ENCODE measurements at regions of chr17 and their contacts with region 1.

Region 1: GRCh38 chr17:74457146-74457819 is 9.2 kb upstream of the CD300A start:
- DNase-seq: peak in 2 of 3 donors; percentile 72 to 80
- H3K4me3 ChIP-seq: peak overlapping the region in 1 of 7 experiments; percentile 6
- H3K27ac ChIP-seq: no peak overlapping the region
- H3K4me1 ChIP-seq: peaks cover 1 to 61% (median 61%) of the 10 kb centered on the region in 4 experiments
- H3K27me3 ChIP-seq: peaks cover 0 to 5% (median 0%) of the 10 kb centered on the region in 5 experiments

Region 2: DNA sequence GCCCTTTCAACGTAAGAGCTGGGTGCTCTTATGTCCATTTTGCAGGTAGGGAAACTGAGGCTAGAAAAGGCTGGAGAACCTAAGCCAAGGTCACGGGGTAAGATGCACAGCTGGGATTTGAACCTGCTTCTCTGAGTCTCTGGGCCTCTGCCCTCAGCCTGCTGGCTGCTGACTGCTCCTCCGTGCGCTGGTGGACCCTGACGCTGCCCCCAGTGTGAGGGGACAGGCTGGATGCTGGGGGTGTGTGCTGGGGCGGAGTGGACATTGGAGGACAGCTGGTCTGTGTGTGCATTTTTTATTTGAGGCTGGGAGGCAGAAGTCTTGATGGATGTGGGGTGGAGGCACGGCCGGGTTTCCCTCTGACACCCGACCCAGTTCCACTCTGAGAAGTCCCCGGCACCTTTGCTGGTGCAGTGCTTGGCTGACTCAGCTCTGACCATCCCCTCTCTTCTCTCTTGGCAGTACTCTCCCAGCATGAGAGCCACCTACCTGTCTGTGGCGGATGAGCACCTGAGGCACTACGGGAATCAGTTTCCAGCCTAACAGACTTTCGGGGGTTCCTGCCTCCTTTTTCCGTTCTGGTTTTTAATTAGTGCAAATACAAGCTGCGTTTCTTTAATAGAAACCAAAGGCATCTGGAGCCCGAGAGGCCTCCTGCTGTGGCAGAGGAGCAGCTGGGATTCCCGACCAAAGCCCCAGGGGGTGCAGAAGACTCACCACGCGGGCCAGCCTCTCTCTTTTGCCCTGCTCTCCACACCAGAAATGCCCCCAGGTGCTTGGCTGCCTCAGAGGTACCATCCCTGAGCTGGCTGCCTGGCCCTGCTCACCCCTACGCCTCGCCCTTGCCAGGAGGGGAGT is 197.4 kb before region 1 on chr17:
- CTCF ChIA-PET with region 1: no interaction called
- POLR2A ChIA-PET with region 1: no interaction called
- DNase-seq: no peak
- H3K4me3 ChIP-seq: no peak overlapping the region
- H3K27ac ChIP-seq: no peak overlapping the region
- H3K4me1 ChIP-seq: peaks cover 0 to 2% (median 0%) of the 10 kb centered on the region in 4 experiments
- H3K27me3 ChIP-seq: no peaks in the 10 kb centered on the region

Region 3: GRCh38 chr17:74361230-74362068 is 95.8 kb before region 1 on chr17 and contains the start of gene BTBD17:
- CTCF ChIA-PET with region 1: interaction called, 25 read pairs
- POLR2A ChIA-PET with region 1: no interaction called
- DNase-seq: peak in 2 of 3 donors; percentile 31 to 39
- H3K4me3 ChIP-seq: no peak within 1 kb of the TSS
- H3K27ac ChIP-seq: no peak within 1 kb of the TSS
- H3K4me1 ChIP-seq: peaks cover 0 to 29% (median 23%) of the 10 kb centered on the region in 4 experiments
- H3K27me3 ChIP-seq: peaks cover 0 to 38% (median 15%) of the 10 kb centered on the region in 5 experiments

Region 4: DNA sequence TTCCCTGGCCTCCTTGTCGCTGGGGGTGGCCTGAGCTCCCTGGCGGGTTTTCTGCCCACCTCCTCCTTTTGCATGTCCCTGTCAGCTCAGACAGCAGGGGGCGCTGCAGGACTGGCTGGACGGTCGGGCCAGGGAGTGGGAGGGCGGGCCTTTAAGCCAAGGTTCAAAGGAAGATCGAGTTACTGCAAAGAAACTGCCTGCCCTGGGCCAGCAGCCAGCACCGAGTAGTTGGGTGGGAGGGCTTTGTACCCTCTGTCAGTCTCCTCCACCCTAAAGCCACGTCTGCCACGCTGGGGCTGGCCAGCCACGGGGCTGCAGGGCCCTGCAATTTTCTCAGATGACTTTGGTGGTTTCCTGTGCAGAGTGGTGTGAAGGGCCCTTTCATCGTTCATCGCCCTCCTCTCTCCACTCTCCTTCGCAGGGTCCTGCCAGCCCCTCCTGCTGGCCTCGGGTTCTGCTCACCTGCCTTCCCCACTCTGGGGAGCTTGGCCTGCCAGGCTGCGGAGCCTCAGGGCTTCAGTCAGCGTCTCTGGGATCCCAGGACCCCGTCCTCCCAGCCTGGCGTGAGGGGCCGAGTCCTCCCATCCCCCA is 77.7 kb before region 1 on chr17:
- CTCF ChIA-PET with region 1: interaction called, 184 read pairs
- POLR2A ChIA-PET with region 1: no interaction called
- DNase-seq: peak; percentile 85 to 91 (median 90)
- H3K4me3 ChIP-seq: peak overlapping the region in 4 of 7 experiments; percentile 3 to 58 (median 20)
- H3K27ac ChIP-seq: no peak overlapping the region
- H3K4me1 ChIP-seq: peaks cover 0 to 21% (median 16%) of the 10 kb centered on the region in 4 experiments
- H3K27me3 ChIP-seq: no peaks in the 10 kb centered on the region

Region 5: DNA sequence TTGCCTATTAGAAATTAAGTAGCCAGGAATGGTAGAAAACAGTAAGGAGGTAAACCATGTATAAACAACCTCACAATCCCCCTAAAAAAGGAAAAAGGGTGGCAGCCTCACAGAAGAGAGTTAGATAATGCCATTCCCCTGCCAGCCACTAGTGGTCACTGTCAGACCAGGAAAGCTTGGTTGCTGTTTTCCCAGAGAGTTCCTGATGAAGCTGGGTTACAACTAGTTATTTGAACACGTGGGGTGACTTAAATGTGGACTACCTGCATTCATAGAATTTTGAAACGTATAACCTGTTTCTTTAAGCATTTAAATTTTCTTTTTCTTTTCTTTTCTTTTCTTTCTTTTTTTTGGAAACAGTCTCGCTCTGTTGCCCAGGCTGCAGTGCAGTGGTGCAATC is 19.6 kb before region 1 on chr17:
- CTCF ChIA-PET with region 1: interaction called, 63 read pairs
- POLR2A ChIA-PET with region 1: no interaction called
- DNase-seq: peak in 2 of 3 donors; percentile 52 to 55
- H3K4me3 ChIP-seq: no peak overlapping the region
- H3K27ac ChIP-seq: no peak overlapping the region
- H3K4me1 ChIP-seq: peaks cover 0 to 23% (median 15%) of the 10 kb centered on the region in 4 experiments
- H3K27me3 ChIP-seq: peaks cover 0 to 17% (median 5%) of the 10 kb centered on the region in 5 experiments

Region 6: DNA sequence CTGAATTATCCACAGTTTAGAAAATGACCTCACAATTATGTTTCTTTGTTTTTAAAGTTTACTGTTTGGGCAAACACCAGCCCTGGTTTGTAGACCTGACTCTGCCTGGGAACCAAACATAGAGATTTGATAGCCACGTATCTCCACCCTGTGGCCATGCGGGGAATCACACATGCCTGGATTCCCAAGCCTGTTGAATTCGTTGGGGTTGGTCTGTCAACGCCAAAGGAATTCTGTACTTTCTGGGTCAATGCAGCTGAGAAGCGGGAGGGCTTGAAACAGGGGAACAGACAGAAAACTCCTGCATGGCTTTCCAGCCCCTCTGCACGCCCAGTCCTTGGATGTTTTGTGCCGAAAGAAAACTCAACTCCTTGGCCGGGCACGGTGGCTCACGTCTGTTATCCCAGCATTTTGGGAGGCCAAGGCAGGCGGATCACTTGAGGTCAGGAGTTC is 36.1 kb after region 1 on chr17:
- CTCF ChIA-PET with region 1: interaction called, 10 read pairs
- POLR2A ChIA-PET with region 1: interaction called, 4 read pairs
- DNase-seq: peak; percentile 68 to 81 (median 75)
- H3K4me3 ChIP-seq: no peak overlapping the region
- H3K27ac ChIP-seq: no peak overlapping the region
- H3K4me1 ChIP-seq: peaks cover 0 to 29% (median 3%) of the 10 kb centered on the region in 4 experiments
- H3K27me3 ChIP-seq: no peaks in the 10 kb centered on the region

Measured in common myeloid progenitor, CD34-positive (primary cell).